Activated CD4-positive, alpha-beta T cell treated with anti-CD3 and anti-CD28 coated beads, Interleukin-2, amount 10 ng/mL, durations not matched to agents 24 days and 14 days (primary cell): ENCODE measurements at regions of chr15 and their contacts with region 1.

Region 1: GRCh38 chr15:89329329-89330084 is 5.1 kb downstream of the POLG start:
- DNase-seq: peak; percentile 82
- H3K4me3 Mint-ChIP-seq: peak overlapping the region; percentile 69
- H3K27ac Mint-ChIP-seq: peak overlapping the region; percentile 74
- H3K4me1 Mint-ChIP-seq: peaks cover 43% of the 10 kb centered on the region
- H3K27me3 Mint-ChIP-seq: no peaks in the 10 kb centered on the region

Region 2: DNA sequence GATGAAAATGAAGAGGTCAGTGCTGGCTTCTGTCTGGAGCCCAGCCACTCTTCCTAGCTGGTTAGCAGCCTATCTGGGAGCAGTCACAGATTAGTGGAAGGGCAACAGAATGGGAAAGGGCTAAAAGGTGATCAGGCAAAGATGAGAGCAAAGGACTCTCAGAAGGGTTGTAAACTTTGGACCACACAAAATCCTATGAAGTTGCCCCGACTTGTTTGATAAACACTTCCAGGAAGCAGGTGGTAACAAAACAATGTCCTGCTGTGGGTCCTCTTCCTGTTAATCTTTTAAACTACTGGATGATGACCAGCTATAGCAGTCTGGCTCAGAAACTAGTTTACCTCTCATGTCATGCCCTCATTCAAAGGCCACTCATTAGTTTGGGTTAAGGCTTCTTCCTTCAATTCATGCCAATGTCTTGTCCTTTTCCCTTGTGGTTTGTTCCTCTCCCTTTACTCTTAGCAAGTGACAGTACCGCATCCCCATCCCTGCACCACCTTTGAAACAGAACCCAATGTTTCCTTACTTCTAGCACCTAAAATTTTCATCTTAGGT is 14.1 kb before region 1 on chr15:
- intact Hi-C with region 1: loop called (anchors 2 kb)
- DNase-seq: no peak
- H3K4me3 Mint-ChIP-seq: no peak overlapping the region
- H3K27ac Mint-ChIP-seq: peak overlapping the region; percentile 48
- H3K4me1 Mint-ChIP-seq: peaks cover 30% of the 10 kb centered on the region
- H3K27me3 Mint-ChIP-seq: no peaks in the 10 kb centered on the region